Left ventricle myocardium inferior (tissue), 1 donor: ENCODE measurements at regions of chr10 and their contacts with region 1.

Region 1: GRCh38 chr10:48551861-48552591 is 52.8 kb downstream of the ARHGAP22 start:
- DNase-seq: peak; percentile 38
- H3K4me3 ChIP-seq: no peak overlapping the region
- H3K27ac ChIP-seq: no peak overlapping the region
- H3K4me1 ChIP-seq: peaks cover 23% of the 10 kb centered on the region
- H3K27me3 ChIP-seq: no peaks in the 10 kb centered on the region
- CTCF ChIP-seq: peak; percentile 85

Region 2: DNA sequence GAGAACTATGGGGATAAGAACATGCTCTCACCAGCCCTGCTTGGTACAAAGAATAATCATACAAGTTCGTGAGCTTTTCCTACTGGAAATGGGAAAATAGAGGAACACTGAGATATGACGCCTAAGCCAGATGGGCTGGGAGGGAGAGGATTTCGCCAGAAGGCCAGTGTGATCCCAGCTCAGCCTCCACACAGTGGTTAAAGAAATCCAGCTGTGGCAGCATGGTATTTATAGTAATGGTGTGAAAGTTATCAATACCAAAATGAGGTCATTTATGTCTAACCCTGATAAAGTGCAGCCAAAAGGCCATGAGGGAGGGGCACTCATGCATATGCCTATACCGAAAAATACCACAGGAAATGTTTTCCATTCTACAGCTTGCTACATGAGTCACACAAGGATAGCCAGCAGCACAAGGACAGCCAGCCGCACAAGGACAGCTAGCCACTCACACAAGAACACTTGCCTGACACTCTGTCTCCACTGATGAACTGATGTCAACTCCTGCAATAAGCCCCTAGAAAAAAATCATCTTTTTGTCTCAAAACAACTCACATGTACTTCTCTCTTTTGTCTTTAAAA is 327.0 kb before region 1 on chr10:
- intact Hi-C with region 1: no loop called
- DNase-seq: no peak
- H3K4me3 ChIP-seq: no peak overlapping the region
- H3K27ac ChIP-seq: no peak overlapping the region
- H3K4me1 ChIP-seq: peaks cover 12% of the 10 kb centered on the region
- H3K27me3 ChIP-seq: no peaks in the 10 kb centered on the region
- CTCF ChIP-seq: no peak

Region 3: DNA sequence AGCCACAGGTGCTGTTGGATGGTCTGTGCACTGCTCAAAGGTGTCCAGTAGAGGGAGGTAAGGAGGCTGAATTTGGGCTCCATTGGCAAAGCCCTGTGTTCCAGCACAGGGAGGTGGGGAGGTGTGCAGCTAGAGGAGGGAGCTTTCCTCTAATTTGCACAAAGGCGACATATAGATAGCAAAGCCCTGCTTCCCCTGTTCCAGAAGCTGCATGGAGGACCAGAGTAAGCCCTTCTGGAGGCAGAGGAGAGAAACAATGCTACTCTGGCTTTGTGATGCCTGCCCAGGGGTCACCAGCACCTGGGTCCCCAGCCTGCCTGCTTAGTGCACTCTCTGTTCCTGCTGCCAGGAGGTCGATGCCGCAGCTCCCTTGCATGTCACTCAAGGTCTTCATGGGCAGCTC is 56.3 kb after region 1 on chr10:
- intact Hi-C with region 1: loop called (anchors 10 kb)
- DNase-seq: no peak
- H3K4me3 ChIP-seq: no peak overlapping the region
- H3K27ac ChIP-seq: no peak overlapping the region
- H3K4me1 ChIP-seq: peaks cover 42% of the 10 kb centered on the region
- H3K27me3 ChIP-seq: peaks cover 18% of the 10 kb centered on the region
- CTCF ChIP-seq: peak; percentile 72

Region 4: DNA sequence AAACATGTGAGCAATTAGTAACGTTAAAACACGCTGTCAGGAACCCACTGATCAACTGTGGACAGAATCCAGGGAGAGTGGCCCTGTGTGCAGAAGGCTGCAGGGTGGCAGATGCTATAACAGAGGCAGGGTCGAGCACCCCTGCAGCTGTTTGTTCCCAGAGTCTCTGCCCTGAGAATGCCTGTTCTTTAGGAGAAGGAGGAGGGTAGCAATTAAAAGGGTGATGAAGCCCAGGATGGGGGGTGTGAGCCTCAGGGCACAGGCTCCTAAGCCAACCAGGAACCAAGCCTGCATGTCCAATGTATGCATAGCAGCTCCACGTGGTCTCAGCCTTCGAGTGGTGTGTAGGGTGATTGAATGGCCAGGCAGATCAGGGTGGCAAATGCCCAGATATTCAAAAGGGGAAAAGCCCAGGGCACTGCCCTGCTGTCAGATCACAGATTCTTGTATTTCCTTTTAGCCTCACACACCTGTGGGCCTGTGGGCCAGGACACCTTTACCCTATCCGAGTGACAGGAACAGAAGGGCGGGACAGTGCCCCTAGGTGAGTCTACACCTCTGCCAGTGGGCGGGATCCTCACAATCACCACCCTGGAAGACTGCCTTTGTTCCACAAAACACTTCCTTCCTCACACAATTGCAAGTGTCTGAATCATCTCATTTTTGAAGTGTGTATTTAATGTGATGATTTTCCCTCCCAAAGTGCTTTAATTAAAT is 139.9 kb after region 1 on chr10:
- intact Hi-C with region 1: no loop called
- DNase-seq: no peak
- H3K4me3 ChIP-seq: no peak overlapping the region
- H3K27ac ChIP-seq: no peak overlapping the region
- H3K4me1 ChIP-seq: peaks cover 2% of the 10 kb centered on the region
- H3K27me3 ChIP-seq: no peaks in the 10 kb centered on the region
- CTCF ChIP-seq: no peak